Left cardiac atrium (tissue), 4 donors: ENCODE measurements at regions of chr6 and their contacts with region 1.

Region 1: GRCh38 chr6:127464881-127465459 is 5.8 kb upstream of the KIAA0408 start:
- DNase-seq: peak; percentile 69
- ATAC-seq: peak; percentile 89 to 91

Region 2: DNA sequence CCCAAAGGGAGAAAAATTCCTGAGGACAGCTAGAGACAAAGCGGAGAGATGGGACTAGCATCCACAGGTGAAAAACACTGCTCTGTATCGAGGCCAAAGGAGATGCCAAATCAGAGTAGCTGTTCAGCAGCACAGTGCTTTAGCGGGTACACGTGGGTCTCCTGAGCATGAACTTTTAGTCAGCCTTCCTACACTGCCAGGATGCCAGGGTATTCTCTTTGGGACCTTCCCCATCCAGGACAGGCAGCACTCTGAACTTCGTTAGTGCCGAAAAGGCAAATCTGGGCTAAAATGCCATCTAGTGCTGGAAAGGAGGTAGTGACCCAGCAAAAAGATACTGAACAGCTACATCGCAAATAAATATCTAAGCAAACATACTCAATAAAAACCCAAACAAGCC is 176.9 kb after region 1 on chr6:
- intact Hi-C with region 1: loop called in 1 of 2 experiments (anchors 5 kb)
- DNase-seq: no peak
- ATAC-seq: peak in 1 of 2 donors; percentile 49